ENCODE measurements at regions of chr9 and their contacts with region 1.

Region 1: GRCh38 chr9:116589392-116590354 is 97.4 kb upstream of the TRIM32 start:
- ATAC-seq: peak in 3 of 8 experiments; percentile 10 to 82 (median 61)
- H3K4me3 ChIP-seq: no peak overlapping the region
- H3K27ac ChIP-seq: no peak overlapping the region
- H3K4me1 ChIP-seq: peaks cover 3 to 6% of the 10 kb centered on the region in 2 donors

Region 2: DNA sequence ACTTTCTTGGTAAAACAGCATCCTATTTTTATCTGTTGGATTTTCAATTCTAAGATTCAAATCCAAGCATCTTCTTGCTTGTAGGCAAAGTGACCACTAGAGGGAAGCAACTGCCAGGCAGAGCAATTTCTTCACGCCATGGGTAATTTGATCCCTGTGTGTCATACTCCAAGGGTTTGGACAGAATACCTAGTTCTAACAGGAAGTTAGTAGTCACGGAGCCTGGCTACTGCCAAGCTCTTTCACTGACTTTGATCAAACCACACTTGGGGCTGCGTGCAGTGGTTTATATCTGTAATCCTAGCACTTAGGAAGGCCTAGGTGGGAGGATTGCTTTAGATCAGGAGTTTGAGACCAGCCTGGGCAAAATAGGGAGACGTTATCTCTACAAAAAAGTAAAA is 998.1 kb before region 1 on chr9:
- in situ Hi-C with region 1: loop called in 1 of 9 experiments (anchors 25 kb)
- ATAC-seq: peak; percentile 20 to 97 (median 82)
- H3K4me3 ChIP-seq: no peak overlapping the region
- H3K27ac ChIP-seq: no peak overlapping the region
- H3K4me1 ChIP-seq: peaks cover 5 to 10% of the 10 kb centered on the region in 2 donors

Region 3: DNA sequence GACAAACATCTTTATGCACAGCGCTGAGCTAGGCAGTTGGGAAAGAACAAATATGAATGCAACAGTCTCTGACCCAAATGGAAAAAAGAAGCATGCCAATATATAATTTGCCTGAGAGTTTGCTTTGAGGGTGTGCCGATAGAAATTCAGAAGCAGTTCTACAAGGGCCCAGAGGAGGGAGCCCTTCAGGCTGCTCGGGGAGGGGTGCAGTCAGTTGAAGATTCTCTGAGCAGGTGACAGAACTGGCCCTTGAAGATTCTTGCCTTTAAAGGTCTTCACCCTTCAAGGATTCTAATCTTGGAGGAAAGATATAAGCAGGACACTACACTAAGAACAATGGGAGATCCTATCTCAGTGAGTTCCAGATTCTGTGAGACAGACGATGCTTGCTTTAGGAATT is 439.8 kb before region 1 on chr9:
- in situ Hi-C with region 1: loop called in 1 of 9 experiments (anchors 25 kb)
- ATAC-seq: peak in 3 of 8 experiments; percentile 2 to 66 (median 19)
- H3K4me3 ChIP-seq: no peak overlapping the region
- H3K27ac ChIP-seq: no peak overlapping the region
- H3K4me1 ChIP-seq: peaks cover 3 to 10% of the 10 kb centered on the region in 2 donors

Region 4: GRCh38 chr9:116646661-116647512 is 57.2 kb after region 1 on chr9:
- in situ Hi-C with region 1: loop called in 1 of 9 experiments (anchors 10 kb)
- ATAC-seq: peak; percentile 53 to 95 (median 80)
- H3K4me3 ChIP-seq: no peak overlapping the region
- H3K27ac ChIP-seq: no peak overlapping the region
- H3K4me1 ChIP-seq: no peaks in the 10 kb centered on the region